ENCODE measurements at regions of chr13 and their contacts with region 1.

Region 1: DNA sequence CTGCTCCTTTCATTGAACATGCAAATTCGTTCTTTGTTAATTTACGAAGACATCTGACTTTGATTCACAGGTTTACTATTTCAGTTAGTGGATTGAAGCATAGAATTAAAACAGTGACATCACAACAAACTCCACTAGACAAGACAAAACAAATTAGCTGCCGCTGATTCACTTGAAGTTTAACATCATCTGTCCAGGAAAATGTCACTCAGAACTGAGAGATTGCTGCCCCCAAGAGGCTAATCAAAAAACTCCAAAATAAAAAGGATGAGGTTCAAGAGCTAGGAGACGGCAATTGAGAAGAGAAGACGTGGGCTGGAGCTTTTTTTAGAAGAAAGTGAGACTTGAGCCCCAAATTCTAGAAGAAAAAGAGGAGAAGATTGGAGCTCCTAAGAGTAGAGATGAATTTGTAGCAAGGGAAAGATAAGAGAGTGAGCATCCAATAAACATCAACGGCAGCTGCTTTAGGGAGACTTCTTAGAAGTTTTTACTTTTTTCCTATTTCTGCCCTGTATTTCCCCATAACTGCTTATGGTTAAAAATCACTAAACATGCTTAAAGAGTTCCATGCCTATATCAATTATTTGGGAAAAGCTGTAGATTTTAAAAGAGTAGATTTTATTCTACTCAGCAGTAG is 40.8 kb upstream of the TPP2 start:
- DNase-seq: no peak
- H3K4me3 Mint-ChIP-seq: no peak overlapping the region
- H3K27ac Mint-ChIP-seq: no peak overlapping the region
- H3K4me1 Mint-ChIP-seq: no peaks in the 10 kb centered on the region
- H3K27me3 Mint-ChIP-seq: peaks cover 9% of the 10 kb centered on the region

Region 2: GRCh38 chr13:102141625-102142472 is 414.2 kb before region 1 on chr13:
- intact Hi-C with region 1: loop called (anchors 1 kb)
- DNase-seq: no peak
- H3K4me3 Mint-ChIP-seq: no peak overlapping the region
- H3K27ac Mint-ChIP-seq: no peak overlapping the region
- H3K4me1 Mint-ChIP-seq: no peaks in the 10 kb centered on the region
- H3K27me3 Mint-ChIP-seq: no peaks in the 10 kb centered on the region

Region 3: GRCh38 chr13:102470283-102470917 is 85.6 kb before region 1 on chr13:
- intact Hi-C with region 1: loop called (anchors 10 kb)
- DNase-seq: no peak
- H3K4me3 Mint-ChIP-seq: no peak overlapping the region
- H3K27ac Mint-ChIP-seq: no peak overlapping the region
- H3K4me1 Mint-ChIP-seq: no peaks in the 10 kb centered on the region
- H3K27me3 Mint-ChIP-seq: no peaks in the 10 kb centered on the region

Measured in activated T-helper 1 cell treated with anti-CD3 and anti-CD28 coated beads, Interleukin-12 subunit alpha, Interleukin-12 subunit beta, Interleukin-2, Interleukin-4 antibody, amounts not matched to agents 30 ng/mL and 10 ng/mL and 1 ng/mL, durations not matched to agents 14 hours and 24 hours and 36 hours (primary cell).